Right ventricle myocardium inferior (tissue), 1 donor: ENCODE measurements at regions of chr19 and their contacts with region 1.

Region 1: GRCh38 chr19:680287-681028 is 4.3 kb downstream of the FSTL3 start:
- DNase-seq: peak; percentile 100
- ATAC-seq: peak; percentile 89

Region 2: DNA sequence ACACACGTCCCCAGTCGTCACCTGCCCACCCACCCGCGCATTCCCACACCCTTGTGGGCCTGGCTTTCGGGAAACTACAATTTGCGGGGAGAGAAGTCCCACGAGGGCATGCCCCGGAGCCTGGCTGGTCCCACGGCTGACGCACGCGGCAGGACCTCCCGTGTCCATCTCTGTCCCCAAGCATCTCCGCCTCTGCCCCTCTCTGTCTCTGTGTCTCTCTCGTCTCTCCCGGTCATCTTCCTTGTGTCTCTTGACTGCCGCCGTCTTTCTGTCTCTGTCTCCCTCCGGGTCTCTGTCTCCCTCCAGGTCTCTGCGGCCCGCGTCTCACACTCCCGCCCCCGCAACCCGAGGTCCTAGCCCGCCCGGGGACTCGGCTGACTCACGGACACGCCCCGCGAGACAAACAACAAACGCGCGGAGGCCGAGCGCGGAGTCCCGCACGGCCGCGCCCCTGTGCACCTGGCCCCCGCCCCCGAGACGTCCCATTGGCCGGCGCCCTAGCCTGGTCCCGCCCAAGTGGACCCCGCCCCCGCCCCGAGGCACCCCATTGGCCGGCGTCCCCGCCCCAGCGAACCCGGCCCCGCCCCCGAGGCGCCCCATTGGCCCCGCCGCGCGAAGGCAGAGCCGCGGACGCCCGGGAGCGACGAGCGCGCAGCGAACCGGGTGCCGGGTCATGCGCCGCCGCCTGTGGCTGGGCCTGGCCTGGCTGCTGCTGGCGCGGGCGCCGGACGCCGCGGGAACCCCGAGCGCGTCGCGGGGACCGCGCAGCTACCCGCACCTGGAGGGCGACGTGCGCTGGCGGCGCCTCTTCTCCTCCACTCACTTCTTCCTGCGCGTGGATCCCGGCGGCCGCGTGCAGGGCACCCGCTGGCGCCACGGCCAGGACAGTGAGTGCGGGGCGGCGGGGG is 41.0 kb before region 1 on chr19 and contains the start of gene FGF22:
- intact Hi-C with region 1: no loop called
- DNase-seq: peak; percentile 96
- ATAC-seq: peak; percentile 95
- total RNA-seq, gene FGF22: not detected

Region 3: GRCh38 chr19:662962-663681 is 17.3 kb before region 1 on chr19 and contains the start of gene RNF126:
- intact Hi-C with region 1: loop called (anchors 1 kb)
- DNase-seq: peak; percentile 96
- ATAC-seq: peak; percentile 91
- total RNA-seq, gene RNF126: 19.7 TPM

Region 4: DNA sequence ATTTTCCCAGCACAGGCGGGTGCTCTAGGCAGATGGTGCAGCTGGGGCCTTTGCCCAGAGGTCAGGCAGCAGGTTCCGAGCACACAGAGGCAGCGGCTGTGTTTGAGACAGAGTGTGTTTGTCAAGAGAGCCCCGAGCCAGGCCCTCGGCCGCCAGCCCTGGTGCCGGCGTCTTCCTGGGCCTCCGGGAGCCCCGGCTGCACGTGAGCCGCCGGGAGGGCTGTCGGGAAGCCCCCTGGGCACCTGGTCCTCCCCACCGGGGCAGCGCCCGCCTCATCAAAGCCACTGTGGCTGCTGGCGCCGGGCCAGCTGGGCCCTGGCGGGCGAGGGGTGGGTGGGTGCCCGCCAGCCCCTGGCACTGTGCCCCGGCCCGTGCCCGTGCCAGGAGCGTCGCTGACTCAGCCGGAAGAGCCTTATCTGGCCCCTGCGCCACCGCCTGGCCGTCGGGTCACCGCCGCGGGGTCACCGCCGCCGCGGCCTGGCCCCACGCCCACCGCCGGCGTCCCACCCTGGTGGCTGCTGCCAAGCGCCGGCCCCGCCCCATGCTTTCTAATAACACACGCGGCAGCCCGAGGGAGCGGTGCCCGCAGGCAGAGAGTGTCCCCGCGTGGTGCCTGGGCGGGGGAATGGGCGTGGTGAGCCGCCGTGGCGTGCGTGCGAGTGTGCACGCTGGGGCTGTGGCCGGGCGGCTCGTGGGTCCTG is 260.3 kb after region 1 on chr19:
- intact Hi-C with region 1: no loop called
- DNase-seq: peak; percentile 91
- ATAC-seq: peak; percentile 72